ENCODE measurements at regions of chr17 and their contacts with region 1.

Region 1: DNA sequence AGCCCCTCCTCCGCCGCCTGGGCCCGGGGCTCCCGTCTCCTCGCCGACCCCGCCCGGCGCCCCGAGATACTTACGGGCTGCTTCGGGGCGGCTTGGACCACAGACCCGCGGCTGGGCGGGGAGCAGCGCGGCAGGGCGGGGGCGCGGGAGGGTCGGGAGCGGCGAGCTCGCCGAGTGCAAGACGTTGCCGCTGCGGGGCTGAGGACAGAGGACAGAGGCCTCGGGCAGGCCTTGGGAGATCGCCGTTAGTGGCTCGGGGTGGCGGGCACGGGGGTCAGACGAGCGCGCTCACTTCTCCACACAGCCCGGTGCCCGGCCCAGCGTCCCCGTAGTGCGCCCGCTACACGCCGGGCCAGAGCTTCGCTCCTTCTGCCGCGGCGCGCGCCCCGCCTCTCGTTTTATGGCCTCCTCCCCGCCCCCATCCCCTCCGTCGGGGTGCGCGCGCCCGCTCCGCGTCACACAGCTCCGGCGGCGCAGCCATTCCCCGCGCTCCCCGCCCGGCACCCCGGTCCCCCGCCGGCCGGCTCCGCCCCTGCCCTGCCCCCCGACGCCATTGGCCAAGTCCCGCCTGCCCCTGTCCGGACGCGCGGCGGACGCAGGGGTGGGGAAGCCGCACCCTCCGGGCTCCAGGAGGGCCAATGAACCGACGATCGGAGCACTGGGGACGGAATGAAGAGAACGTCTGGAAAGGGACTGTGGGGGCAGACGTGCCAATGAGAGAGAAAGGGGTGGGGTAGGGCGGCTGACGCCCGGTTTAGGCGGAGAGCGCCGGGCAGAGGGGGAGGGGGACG is at the start of gene TOB1:
- DNase-seq: peak; percentile 99
- total RNA-seq, gene TOB1: 48.9 to 59.1 TPM

Region 2: DNA sequence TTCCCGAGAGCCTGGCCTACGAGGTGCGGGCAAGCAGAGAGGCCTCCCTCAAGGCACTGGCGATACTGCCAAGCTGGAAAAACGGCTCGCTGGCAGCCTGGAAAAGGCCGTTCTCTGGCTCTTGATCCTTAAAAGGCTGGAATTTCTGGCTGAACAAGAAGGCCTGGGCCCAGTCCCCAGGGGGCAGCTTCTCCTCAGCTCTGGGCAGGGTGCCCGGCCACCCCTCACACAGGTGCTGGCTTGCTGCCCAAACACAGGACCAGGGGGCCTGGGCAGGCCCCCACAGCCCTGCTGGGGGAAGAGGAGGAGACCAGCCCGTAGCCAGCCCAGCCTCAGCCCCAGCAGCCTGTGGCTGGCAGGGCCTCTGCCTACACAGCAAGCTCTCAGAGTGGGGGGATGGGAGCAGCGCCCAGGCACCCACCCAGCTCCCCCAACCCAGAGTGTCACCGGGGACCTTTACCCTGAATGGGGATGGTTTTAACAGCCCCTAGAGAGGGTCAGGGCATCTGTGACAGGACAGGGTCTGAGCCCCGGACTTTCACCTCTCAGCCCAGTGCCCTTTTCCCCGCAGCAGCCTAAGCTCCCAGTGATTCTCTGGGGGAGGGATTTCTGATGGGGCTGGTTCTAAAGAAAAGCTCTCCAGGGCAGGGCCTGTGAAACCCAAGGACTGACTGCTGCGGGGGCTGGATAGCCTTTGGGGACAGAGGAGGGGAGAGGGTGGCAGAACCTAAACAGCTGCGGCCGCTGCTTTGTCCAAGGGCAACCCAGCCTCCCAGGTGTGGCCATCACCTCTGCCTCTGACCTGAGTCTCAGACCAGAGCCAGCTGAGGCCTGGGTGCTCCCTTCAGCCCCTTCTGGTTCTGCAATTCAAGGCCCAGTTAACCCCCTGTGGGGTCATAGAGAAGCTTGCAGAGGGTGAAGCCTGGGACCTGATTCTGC is 38.6 kb after region 1 on chr17:
- intact Hi-C with region 1: loop called in 1 of 2 experiments (anchors 5 kb)
- DNase-seq: no peak

Region 3: DNA sequence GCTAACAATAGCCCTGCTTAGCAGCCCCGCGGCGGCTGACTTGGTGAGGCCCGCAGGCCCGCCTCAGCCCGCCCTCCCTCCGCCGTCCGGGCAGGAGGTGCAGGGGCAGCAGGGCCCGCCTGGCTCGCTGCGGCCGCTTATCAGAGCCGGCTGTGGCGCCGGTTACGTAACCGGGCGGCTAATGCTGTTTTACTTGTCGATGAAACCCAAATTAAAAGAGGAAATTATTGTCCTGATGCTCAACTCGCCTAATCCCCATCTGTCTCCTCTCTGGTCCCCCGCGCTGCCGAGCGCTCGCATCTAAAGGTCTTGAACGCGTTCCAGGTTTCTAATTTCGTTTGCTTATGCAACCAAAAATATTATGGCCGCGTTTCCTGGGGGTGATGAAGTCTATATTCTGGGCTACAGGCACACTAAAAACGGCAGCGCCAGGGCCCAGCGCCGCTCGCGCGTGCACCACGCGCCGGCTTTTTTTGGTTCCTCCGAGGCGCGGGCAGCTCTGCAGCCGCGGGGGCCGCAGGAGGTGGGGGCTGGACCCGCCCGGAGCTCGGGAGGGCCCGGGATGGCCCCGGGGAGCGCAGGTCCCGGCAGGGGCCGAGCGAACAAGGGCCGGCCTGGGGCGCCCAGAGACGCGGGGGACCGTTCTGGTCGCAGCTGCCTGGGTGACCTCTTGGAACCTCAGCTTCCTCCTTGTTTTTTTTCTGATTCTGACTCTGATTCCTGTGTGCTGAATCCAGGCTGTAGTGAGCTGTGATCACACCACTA is 65.1 kb after region 1 on chr17:
- intact Hi-C with region 1: loop called in 1 of 2 experiments (anchors 5 kb)
- DNase-seq: peak; percentile 95

Region 4: DNA sequence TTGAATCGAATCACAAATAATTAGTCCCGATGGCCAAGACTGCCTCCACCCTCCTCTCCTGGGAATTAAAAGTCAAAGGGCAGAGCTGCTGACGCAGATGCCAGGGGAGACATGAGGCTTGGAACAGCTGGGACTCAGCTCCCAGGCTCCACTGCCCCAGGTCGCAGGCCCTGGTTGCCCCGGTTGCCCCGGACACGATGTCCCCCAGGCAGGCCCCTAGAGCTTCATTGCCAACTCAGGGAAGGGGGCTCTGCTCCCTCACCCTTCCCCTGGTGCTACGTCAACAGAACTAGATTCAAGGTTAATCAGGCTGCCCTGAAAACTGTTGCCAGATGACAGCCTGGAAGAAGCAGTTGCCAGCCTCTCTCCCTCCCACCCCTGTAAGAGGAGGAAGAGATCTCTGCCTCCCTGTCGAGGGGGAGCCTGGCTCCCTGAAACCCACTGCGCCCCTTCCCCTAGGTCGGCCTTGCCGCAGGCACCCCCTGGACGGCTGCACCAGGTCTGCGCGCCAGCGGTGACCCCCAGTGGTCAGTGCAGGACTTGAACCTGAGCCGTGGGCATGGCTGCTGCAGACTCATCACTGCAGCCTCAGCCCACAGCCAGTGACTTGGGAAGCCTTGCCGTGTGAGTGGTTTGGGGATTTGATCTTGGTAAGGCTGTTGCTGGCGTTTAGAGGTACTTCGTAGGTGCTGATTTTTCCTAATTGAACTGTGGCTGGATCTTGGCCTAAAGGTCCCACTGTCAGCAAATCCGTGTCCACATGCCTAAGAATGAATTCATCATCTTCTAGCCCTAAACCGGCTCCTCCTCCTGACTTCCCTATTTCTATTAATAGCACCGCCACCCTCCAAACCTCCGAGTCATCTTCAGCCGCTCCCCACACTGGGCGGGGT is 84.1 kb after region 1 on chr17:
- intact Hi-C with region 1: loop called (anchors 1 to 2 kb)
- DNase-seq: peak; percentile 93

Region 5: DNA sequence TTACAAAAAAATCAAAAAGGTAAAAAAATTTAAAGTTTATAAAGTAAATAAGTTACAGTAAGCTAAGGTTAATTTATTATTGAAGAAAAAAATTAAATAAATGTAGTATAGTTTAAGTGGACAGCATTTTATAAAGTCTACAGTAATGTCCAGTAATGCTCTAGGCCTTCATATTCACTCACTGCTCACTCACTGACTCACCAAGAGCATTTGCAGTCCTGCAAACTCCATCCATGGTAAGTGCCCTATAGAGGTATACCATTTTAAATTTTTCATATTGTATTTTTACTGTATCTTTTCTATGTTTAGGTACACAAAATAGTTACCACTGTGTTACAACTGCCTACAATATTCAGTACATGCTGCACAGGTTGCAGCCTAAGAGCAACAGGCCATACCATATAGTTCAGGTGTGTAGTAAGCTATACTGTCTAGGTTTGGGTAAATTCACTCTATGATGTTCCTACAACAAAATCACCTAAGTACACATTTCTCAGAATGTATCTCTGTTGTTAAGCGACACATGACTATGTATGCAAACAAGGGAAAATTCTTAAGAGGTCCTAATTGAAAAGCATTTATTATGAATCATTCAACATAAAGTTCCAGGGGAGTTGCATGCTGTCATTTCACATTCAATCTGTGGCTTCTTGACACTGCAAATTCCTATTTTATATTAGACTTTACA is 162.1 kb after region 1 on chr17:
- intact Hi-C with region 1: no loop called
- DNase-seq: no peak

Region 6: GRCh38 chr17:51120739-51121617 is 254.8 kb after region 1 on chr17 and contains the start of gene SPAG9:
- intact Hi-C with region 1: loop called in 1 of 2 experiments (anchors 10 kb)
- DNase-seq: peak; percentile 99
- total RNA-seq, gene SPAG9: 88.4 to 126 TPM

Measured in posterior vena cava (tissue), 2 donors.